Calu3 (cell line): ENCODE measurements at regions of chr6 and their contacts with region 1.

Region 1: GRCh38 chr6:40912158-40912946 is 126.7 kb downstream of the UNC5CL start:
- DNase-seq: peak; percentile 72
- H3K4me3 Mint-ChIP-seq: no peak overlapping the region
- H3K27ac Mint-ChIP-seq: no peak overlapping the region
- H3K4me1 Mint-ChIP-seq: peaks cover 9% of the 10 kb centered on the region
- H3K27me3 Mint-ChIP-seq: peaks cover 43% of the 10 kb centered on the region
- CTCF ChIP-seq: peak; percentile 78

Region 2: GRCh38 chr6:39347906-39348585 is 1564.3 kb before region 1 on chr6:
- CTCF ChIA-PET with region 1: no interaction called
- intact Hi-C with region 1: loop called (anchors 10 kb)
- DNase-seq: peak; percentile 83
- H3K4me3 Mint-ChIP-seq: no peak overlapping the region
- H3K27ac Mint-ChIP-seq: no peak overlapping the region
- H3K4me1 Mint-ChIP-seq: no peaks in the 10 kb centered on the region
- H3K27me3 Mint-ChIP-seq: peaks cover 85% of the 10 kb centered on the region
- CTCF ChIP-seq: peak; percentile 94

Region 3: GRCh38 chr6:40894962-40895799 is 17.2 kb before region 1 on chr6:
- CTCF ChIA-PET with region 1: interaction called, 12 read pairs
- intact Hi-C with region 1: loop called (anchors 2 kb)
- DNase-seq: peak; percentile 74
- H3K4me3 Mint-ChIP-seq: no peak overlapping the region
- H3K27ac Mint-ChIP-seq: no peak overlapping the region
- H3K4me1 Mint-ChIP-seq: no peaks in the 10 kb centered on the region
- H3K27me3 Mint-ChIP-seq: peaks cover 30% of the 10 kb centered on the region
- CTCF ChIP-seq: peak; percentile 71